OCI-LY7 (cell line): ENCODE measurements at regions of chr5 and their contacts with region 1.

Region 1: DNA sequence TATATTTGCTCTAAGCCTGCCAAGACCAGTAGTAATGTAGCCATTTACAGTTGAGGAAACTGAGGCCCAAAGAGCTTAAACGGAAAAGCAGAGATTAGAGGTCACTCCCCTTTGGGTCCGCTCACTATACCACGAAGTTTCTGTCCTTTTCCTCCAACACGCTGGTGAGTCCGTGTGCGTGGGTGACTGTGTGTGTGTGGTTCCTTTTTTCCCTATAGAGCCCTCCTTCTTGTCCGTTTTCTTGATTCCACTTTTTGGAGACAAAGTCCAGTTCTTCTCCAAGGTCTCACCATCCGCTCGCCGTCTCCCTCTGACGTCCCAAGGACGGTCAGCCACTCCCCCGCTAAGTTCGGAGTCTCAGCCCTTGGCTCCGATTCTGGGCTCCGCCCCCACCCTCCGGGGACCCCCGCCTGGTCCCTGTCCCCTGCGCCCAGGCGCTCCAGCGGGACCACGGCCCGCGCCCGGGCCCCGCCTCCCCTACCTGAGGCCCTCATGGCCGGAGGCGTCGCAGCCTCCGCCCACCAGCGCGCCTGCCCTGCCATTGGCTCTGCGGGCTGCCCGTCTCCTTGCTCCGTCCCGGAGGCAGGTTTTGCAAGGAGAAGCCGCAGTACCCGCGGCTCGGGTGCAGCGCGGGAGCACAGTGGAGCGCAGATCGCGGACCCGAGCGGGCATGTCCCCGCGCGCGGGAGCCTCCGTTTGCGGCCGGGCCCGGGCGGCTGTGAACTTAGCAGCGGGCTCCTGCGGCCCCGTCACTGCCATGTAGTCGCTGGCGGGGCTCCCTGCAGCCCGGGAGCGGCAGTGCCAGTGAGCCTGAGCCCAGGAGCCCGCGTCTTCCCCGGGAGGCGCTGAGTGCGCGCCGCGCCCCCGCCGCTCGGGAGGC is at the start of gene MAST4:
- DNase-seq: peak; percentile 83
- H3K4me3 ChIP-seq: peak within 1 kb of the TSS; percentile 73
- H3K27ac ChIP-seq: no peak within 1 kb of the TSS
- H3K4me1 ChIP-seq: no peaks in the 10 kb centered on the region
- CTCF ChIP-seq: no peak
- total RNA-seq, gene MAST4: 0.85 and 1.3 TPM in 2 replicates

Region 2: DNA sequence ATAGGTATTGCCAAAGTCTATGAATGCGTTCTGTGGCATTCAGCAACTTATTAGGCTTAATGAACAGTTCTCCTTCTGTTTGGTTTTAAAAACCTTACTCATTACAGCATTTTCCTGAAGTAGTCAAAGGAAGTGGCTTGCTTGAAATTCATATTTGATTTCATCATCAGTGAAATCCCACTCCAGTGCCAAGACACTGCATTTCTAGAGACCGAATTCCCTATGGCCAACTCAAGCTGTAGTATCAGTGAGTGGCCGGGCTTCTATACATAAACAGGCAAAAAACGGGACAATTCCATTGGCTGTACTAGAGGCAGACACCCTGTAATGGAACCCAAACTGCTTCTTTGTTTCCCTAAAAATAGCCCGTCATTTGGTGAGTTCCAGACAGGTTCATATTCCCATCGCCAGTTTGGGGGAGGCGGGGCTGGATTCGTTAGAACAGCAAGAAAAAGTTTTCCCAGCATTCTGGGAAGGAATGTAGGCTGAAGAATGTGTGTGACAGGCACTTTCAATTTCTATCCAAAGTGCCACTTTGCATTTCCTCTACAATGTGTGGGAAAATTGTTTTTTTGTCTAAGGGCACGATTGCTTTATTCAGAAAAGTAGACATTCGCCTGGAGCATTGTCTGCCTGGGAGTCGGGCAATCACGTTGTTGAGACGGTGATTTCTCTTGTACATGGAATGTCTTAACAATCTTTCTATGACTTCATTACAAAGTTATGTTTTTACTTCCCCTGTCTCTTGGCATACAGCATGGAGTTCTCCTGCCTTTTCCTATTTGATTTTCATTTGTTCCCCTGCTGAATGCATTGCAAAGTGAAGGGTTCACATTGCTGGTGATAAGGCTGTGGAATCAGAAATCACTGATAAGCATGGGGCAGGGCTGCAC is 141.6 kb before region 1 on chr5:
- CTCF ChIA-PET with region 1: no interaction called
- POLR2A ChIA-PET with region 1: no interaction called
- intact Hi-C with region 1: no loop called
- DNase-seq: no peak
- H3K4me3 ChIP-seq: no peak overlapping the region
- H3K27ac ChIP-seq: no peak overlapping the region
- H3K4me1 ChIP-seq: no peaks in the 10 kb centered on the region
- CTCF ChIP-seq: no peak

Region 3: DNA sequence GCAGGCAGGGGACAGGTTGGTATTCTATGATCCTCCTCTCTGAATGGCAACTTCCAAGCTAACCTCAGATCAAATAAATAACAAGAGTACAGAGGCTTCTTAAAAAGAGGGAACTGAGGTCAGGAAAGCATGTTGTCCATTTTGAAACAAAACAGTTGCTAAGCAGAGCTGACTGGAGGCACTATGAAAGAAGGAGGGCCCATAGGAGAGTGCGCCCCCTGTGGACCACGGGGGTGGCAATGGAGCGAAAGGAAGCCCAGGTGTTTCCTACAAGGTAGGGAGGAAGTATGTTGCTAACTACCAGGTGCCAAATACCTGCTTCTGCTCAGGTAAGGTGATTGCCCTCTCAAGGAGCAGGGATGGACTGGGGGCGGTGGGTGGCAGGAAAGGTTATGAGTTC is 101.6 kb before region 1 on chr5:
- CTCF ChIA-PET with region 1: no interaction called
- POLR2A ChIA-PET with region 1: no interaction called
- intact Hi-C with region 1: no loop called
- DNase-seq: no peak
- H3K4me3 ChIP-seq: no peak overlapping the region
- H3K27ac ChIP-seq: no peak overlapping the region
- H3K4me1 ChIP-seq: no peaks in the 10 kb centered on the region
- CTCF ChIP-seq: peak; percentile 71

Region 4: GRCh38 chr5:66621146-66621545 is 25.1 kb after region 1 on chr5:
- CTCF ChIA-PET with region 1: no interaction called
- POLR2A ChIA-PET with region 1: interaction called, 3 read pairs
- intact Hi-C with region 1: loop called (anchors 2 kb)
- DNase-seq: no peak
- H3K4me3 ChIP-seq: no peak overlapping the region
- H3K27ac ChIP-seq: no peak overlapping the region
- H3K4me1 ChIP-seq: peaks cover 37% of the 10 kb centered on the region
- CTCF ChIP-seq: no peak